Vagina (tissue), 2 donors: ENCODE measurements at regions of chr2 and their contacts with region 1.

Region 1: DNA sequence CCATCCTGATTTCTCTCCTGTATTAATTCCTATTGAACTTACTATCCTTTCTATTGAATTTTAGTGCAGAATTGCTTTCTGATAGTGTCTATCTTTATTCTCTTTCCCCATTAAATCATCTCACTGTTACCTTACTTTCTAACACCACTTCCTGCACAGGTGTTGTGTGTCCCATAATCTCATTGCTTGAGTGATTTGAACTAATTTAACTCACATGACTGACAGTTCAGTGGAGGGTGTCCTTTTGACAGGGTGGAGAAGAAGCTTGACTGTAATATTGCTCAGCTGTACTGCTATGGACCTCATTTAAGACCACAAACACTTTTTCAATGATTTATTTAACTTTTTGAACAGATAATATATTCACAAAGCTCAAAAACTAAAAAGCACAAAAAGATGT is 211.8 kb downstream of the NRXN1 start:
- DNase-seq: no peak
- H3K4me3 ChIP-seq: no peak overlapping the region
- H3K27ac ChIP-seq: no peak overlapping the region
- H3K4me1 ChIP-seq: no peaks in the 10 kb centered on the region
- H3K27me3 ChIP-seq: no peaks in the 10 kb centered on the region
- CTCF ChIP-seq: no peak
- POLR2A ChIP-seq: no peak

Region 2: GRCh38 chr2:51829477-51829876 is 1009.3 kb after region 1 on chr2:
- intact Hi-C with region 1: loop called (anchors 5 kb)
- DNase-seq: no peak
- H3K4me3 ChIP-seq: no peak overlapping the region
- H3K27ac ChIP-seq: no peak overlapping the region
- H3K4me1 ChIP-seq: no peaks in the 10 kb centered on the region
- H3K27me3 ChIP-seq: no peaks in the 10 kb centered on the region
- CTCF ChIP-seq: no peak
- POLR2A ChIP-seq: no peak